ENCODE measurements at regions of chr19 and their contacts with region 1.

Region 1: GRCh38 chr19:38402967-38403861 is at the start of gene FAM98C:
- DNase-seq: peak; percentile 100
- H3K4me3 ChIP-seq: peak within 1 kb of the TSS; percentile 67 to 93
- H3K27ac ChIP-seq: peak within 1 kb of the TSS; percentile 47 to 65; a peak in 3 of 4 replicates
- H3K4me1 ChIP-seq: no peaks in the 10 kb centered on the region; a peak in 1 of 4 replicates
- H3K27me3 ChIP-seq: no peaks in the 10 kb centered on the region
- CTCF ChIP-seq: peak; percentile 82
- EP300 ChIP-seq: peak in 1 of 2 experiments; percentile 30; a peak in 1 of 4 replicates
- RAD21 ChIP-seq: peak; percentile 84
- polyA plus RNA-seq, gene FAM98C: 24.9 and 26.7 TPM in 2 replicates

Region 2: DNA sequence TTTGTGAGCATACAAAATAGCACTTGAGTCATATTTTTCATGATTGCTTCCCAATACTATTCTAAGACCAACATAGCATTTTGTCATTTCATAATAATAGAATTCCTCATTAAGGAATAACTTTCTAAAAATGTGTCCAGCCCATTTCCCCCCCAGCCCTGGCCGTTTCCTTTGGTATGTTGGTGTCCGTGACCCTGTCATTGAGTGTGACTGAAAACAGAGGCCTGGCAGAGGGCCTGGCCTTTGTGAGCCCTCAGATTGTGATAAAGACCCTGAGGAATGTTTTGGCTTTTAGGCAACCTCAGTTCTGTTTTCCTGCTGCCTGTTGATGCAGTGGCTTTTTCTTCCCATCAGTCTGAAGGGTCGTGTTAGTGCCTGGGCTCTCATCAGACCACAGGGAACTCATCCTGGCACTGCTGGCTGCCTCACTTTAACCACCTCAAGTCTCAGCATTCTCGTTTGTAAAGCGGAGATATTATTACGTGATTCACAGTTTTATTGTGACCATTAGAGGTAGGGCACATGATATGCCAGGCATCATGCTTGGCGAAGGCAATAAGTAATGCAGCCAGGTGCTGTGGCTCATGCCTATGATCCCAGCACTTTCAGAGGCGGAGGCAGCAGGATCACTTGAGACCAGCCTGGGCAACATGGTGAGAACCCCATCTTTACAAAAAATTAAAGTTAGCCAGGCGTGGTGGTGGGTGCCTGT is 125.1 kb before region 1 on chr19:
- CTCF ChIA-PET with region 1: no interaction called
- POLR2A ChIA-PET with region 1: no interaction called
- DNase-seq: peak; percentile 52
- H3K4me3 ChIP-seq: no peak overlapping the region
- H3K27ac ChIP-seq: peak overlapping the region; percentile 39 to 42
- H3K4me1 ChIP-seq: peaks cover 6 to 8% of the 10 kb centered on the region in 2 experiments; a peak in 3 of 4 replicates
- H3K27me3 ChIP-seq: no peaks in the 10 kb centered on the region
- CTCF ChIP-seq: no peak
- EP300 ChIP-seq: peak in 1 of 2 experiments; percentile 60; a peak in 1 of 4 replicates
- RAD21 ChIP-seq: no peak

Region 3: DNA sequence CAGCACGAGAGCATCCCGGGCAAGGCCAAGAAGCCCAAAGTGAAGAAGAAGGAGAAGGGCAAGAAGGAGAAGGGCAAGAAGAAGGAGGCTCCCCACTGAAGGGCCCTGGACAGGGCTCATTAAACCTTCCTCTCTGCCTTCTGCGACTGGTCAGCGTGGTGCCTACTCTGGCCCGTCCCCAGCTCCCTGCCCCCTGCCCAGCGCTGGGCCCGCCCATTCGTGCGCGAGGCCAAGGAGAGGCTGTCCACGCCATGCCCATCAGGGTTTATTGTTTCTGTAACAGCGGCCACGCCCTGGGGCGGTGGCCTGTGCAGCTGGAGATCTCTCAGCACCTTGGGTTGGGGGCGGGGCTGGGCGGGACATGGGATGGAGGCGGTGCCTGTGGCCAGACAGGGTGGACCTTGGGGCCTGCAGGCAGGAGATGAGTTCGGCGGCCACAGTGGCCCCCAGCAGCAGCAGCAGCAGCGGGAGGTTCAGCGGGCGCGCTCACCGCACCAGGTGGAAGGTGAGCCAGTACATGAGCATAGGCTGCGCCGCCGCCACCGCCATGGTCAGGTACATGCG is 98.3 kb before region 1 on chr19:
- CTCF ChIA-PET with region 1: no interaction called
- POLR2A ChIA-PET with region 1: no interaction called
- DNase-seq: peak; percentile 58
- H3K4me3 ChIP-seq: no peak overlapping the region
- H3K27ac ChIP-seq: no peak overlapping the region
- H3K4me1 ChIP-seq: no peaks in the 10 kb centered on the region; a peak in 1 of 4 replicates
- H3K27me3 ChIP-seq: no peaks in the 10 kb centered on the region
- CTCF ChIP-seq: no peak
- EP300 ChIP-seq: no peak
- RAD21 ChIP-seq: no peak

Region 4: GRCh38 chr19:38374429-38375176 is 28.6 kb before region 1 on chr19 and contains the start of gene PSMD8:
- CTCF ChIA-PET with region 1: interaction called, 12 read pairs
- POLR2A ChIA-PET with region 1: interaction called, 3 read pairs
- DNase-seq: peak; percentile 98
- H3K4me3 ChIP-seq: peak within 1 kb of the TSS; percentile 68 to 91
- H3K27ac ChIP-seq: peak within 1 kb of the TSS; percentile 82 to 87
- H3K4me1 ChIP-seq: peaks cover 6 to 14% of the 10 kb centered on the region in 2 experiments; a peak in 3 of 4 replicates
- H3K27me3 ChIP-seq: no peaks in the 10 kb centered on the region
- CTCF ChIP-seq: peak; percentile 22; the same call in 1 of the 2 replicates
- EP300 ChIP-seq: no peak
- RAD21 ChIP-seq: no peak
- polyA plus RNA-seq, gene PSMD8: 400 and 453 TPM in 2 replicates

Region 5: GRCh38 chr19:38387550-38388348 is 15.5 kb before region 1 on chr19 and contains the start of gene GGN:
- CTCF ChIA-PET with region 1: interaction called, 34 read pairs
- POLR2A ChIA-PET with region 1: interaction called, 30 read pairs
- DNase-seq: peak; percentile 95
- H3K4me3 ChIP-seq: peak within 1 kb of the TSS; percentile 84 to 99
- H3K27ac ChIP-seq: peak within 1 kb of the TSS; percentile 88 to 95
- H3K4me1 ChIP-seq: peaks cover 9 to 13% of the 10 kb centered on the region in 2 experiments; a peak in 2 of 4 replicates
- H3K27me3 ChIP-seq: no peaks in the 10 kb centered on the region
- CTCF ChIP-seq: no peak
- EP300 ChIP-seq: no peak
- RAD21 ChIP-seq: no peak
- polyA plus RNA-seq, gene GGN: 0.48 and 0.52 TPM in 2 replicates

Region 6: DNA sequence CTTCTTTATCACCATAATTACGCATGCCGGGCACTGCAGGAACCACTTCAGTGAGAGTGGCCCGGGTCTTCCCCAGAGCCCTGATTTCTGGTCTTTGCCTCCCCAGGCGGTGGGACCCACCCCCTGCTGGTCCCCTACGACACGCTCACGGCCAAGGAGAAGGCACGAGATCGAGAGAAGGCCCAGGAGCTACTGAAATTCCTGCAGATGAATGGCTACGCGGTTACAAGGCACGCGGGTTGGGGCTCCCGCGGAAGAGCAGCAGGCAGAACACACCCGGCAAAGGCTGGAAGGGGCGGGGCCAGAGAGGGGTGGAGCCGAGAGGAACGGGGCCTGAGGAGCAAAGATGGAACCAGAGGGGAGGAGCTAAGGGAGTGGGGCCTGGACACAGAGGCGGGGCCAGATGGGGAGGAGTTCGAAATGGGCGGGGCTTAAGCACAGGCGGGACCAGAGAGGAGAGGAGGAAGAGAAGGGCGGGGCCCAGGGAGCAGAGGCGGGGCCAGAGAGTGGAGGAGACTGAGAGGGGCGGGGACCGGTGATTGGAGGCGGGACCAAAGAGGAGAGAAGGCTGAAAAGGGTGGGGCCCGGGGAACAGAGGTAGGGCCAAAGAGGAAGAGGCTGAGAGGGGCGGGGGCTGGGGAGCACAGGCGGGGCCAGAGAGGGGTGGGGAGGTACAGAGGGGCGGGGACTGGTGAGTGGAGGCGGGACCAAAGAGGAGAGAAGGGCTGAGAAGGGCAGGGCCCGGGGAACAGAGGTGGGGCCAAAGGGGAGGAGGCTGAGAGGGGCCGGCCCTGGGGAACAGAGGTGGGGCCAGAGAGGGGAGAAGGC is 103.7 kb after region 1 on chr19:
- CTCF ChIA-PET with region 1: interaction called, 14 read pairs
- POLR2A ChIA-PET with region 1: no interaction called
- DNase-seq: peak; percentile 99
- H3K4me3 ChIP-seq: peak overlapping the region in 1 of 2 experiments; percentile 29; a peak in 1 of 4 replicates
- H3K27ac ChIP-seq: no peak overlapping the region
- H3K4me1 ChIP-seq: peaks cover 3 to 8% of the 10 kb centered on the region in 2 experiments; a peak in 2 of 4 replicates
- H3K27me3 ChIP-seq: no peaks in the 10 kb centered on the region
- CTCF ChIP-seq: no peak
- EP300 ChIP-seq: no peak
- RAD21 ChIP-seq: no peak

Region 7: GRCh38 chr19:38514812-38515633 is 111.8 kb after region 1 on chr19:
- CTCF ChIA-PET with region 1: interaction called, 21 read pairs
- POLR2A ChIA-PET with region 1: no interaction called
- DNase-seq: peak; percentile 94
- H3K4me3 ChIP-seq: peak overlapping the region in 1 of 2 experiments; percentile 38; a peak in 1 of 4 replicates
- H3K27ac ChIP-seq: no peak overlapping the region
- H3K4me1 ChIP-seq: peaks cover 0 to 3% of the 10 kb centered on the region in 2 experiments; a peak in 1 of 4 replicates
- H3K27me3 ChIP-seq: no peaks in the 10 kb centered on the region; the same call in 1 of the 2 replicates
- CTCF ChIP-seq: peak; percentile 83
- EP300 ChIP-seq: no peak
- RAD21 ChIP-seq: peak; percentile 89